Sciatic nerve (tissue), 2 donors: ENCODE measurements at regions of chr1 and their contacts with region 1.

Region 1: GRCh38 chr1:16078925-16079656 is 5.6 kb upstream of the FAM131C start:
- DNase-seq: peak; percentile 88
- ATAC-seq: peak; percentile 87

Region 2: DNA sequence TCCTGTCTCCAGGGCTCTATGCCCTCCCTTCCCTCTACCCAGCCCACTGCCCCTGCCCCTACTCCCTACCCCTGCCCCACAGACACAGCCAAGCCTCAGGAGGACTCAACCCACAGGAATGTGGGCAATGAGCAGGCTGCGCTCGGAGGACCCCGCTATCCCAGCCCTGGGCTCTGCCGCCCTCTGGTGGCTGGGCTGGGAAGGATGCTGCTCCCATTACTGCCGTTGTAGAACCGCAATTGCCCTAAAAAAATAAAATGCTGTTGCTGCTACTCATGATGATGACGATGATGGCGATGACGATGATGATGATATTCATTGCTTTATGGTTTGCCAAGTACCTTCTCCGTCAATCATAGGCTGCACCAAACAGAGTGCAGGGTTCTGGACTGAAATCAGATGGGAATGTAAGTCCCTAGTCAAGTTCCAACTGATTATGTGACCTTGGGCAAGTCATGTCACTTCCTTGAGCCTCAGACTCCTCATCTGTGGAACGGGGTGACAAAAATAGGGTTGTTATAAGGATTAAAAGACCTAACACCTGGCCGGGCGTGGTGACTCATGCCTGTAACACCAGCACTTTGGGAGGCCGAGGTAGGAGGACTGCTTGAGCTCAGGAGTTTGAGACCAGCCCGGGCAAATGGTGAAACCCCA is 108.8 kb after region 1 on chr1:
- intact Hi-C with region 1: loop called (anchors 5 kb)
- DNase-seq: peak; percentile 88
- ATAC-seq: peak; percentile 78

Region 3: DNA sequence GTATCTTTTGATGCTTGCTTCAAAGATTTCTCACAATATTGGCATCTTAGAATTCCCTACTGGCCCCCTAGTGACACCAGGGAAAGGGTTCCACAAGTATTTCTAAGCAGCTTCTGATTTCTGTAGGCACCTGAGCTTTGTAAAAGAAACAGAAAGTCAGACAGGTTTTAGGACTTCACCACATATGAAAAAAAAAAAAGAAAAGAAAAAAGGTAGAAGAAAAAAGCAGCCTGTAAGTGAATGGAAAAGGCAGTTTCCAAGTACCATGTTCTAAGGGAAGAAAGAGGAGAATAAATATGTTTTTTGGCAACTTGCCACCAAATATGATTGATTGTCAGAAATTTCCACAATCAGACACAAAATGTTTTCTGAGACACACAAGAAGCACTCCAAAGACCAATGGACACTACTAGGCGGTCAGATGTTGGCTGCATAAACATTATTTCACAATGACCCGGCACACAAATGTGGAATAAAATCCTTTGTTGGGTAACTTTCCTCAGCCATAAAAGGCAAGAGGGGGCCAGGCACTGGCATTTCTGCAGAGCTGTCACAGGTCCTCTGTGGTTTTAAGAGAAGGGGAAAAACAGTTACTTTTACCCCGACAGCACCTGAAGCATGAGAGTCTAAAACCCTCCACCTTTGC is 170.6 kb after region 1 on chr1:
- intact Hi-C with region 1: loop called (anchors 1 kb)
- DNase-seq: no peak
- ATAC-seq: peak; percentile 83